ENCODE measurements at regions of chr18 and their contacts with region 1.

Region 1: GRCh38 chr18:63320046-63320689 is 599 bp upstream of the BCL2 start:
- DNase-seq: peak; percentile 92
- H3K4me3 ChIP-seq: peak overlapping the region; percentile 74
- H3K27ac ChIP-seq: peak overlapping the region; percentile 89
- H3K4me1 ChIP-seq: peaks cover 30% of the 10 kb centered on the region
- H3K27me3 ChIP-seq: no peaks in the 10 kb centered on the region
- CTCF ChIP-seq: no peak

Region 2: DNA sequence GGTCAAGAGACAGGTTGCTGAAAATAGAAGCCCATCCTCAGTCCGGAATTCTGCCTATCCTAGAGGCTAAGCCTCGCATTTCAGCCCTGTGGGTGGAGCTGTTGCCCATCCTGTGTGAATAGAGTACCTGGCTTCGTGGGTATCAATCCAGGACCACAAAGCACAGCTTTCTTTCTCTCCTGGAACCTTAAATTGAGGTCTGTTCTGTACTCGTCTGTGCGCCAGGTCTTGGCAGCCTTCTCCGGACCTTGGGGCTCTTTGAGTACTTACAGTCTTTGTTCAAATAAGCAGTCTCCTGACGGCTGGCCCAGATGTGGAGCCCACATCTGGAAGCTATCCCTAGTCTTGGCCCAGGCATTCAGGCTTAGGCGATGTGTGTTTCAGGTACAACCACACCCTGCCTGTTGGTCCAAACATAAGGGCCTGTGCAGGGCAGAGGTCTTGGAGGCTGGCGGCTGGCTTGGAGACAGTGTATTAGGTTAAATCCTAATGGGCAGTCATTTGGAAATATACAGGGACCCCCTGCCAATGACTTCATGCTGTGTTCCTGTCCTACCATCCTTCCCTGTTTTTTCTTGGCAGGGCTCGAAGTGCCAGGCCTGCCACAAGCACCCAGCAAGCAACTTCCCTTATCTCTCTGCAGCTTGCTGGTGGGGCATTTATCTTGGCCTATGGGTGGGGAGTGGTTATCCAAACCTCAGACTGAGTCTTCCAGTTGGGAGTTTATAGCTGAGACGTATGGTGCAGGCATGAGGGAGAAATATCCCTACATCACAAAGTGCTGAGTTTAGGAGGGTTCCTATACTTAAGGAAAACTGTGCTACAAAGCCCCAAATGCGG is 294.7 kb before region 1 on chr18:
- CTCF ChIA-PET with region 1: interaction called, 5 read pairs
- POLR2A ChIA-PET with region 1: no interaction called
- intact Hi-C with region 1: loop called (anchors 2 kb)
- DNase-seq: peak; percentile 63
- H3K4me3 ChIP-seq: no peak overlapping the region
- H3K27ac ChIP-seq: no peak overlapping the region
- H3K4me1 ChIP-seq: peaks cover 3% of the 10 kb centered on the region
- H3K27me3 ChIP-seq: no peaks in the 10 kb centered on the region
- CTCF ChIP-seq: peak; percentile 67

Region 3: DNA sequence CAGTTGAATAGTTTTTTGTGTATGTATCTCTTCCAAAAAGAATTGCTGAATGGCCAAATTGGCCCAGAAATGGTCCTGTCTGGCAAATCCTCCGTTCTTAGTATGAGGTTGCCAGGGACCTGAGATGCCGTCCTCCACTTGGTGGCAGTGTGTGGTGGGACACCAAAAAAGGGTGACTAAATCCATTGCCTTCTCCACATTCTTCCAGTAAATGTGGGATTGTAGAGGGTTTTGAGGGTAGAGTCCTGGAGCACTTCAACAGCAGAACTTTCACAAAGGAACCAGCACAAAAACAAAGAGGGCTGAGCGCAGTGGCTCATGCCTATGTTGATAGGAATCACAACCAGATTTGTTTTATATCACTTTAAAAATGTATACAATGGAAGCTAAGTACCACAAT is 200.5 kb before region 1 on chr18:
- CTCF ChIA-PET with region 1: interaction called, 3 read pairs
- POLR2A ChIA-PET with region 1: no interaction called
- intact Hi-C with region 1: loop called (anchors 2 kb)
- DNase-seq: peak; percentile 89
- H3K4me3 ChIP-seq: no peak overlapping the region
- H3K27ac ChIP-seq: peak overlapping the region; percentile 81
- H3K4me1 ChIP-seq: peaks cover 25% of the 10 kb centered on the region
- H3K27me3 ChIP-seq: no peaks in the 10 kb centered on the region
- CTCF ChIP-seq: peak; percentile 79

Region 4: DNA sequence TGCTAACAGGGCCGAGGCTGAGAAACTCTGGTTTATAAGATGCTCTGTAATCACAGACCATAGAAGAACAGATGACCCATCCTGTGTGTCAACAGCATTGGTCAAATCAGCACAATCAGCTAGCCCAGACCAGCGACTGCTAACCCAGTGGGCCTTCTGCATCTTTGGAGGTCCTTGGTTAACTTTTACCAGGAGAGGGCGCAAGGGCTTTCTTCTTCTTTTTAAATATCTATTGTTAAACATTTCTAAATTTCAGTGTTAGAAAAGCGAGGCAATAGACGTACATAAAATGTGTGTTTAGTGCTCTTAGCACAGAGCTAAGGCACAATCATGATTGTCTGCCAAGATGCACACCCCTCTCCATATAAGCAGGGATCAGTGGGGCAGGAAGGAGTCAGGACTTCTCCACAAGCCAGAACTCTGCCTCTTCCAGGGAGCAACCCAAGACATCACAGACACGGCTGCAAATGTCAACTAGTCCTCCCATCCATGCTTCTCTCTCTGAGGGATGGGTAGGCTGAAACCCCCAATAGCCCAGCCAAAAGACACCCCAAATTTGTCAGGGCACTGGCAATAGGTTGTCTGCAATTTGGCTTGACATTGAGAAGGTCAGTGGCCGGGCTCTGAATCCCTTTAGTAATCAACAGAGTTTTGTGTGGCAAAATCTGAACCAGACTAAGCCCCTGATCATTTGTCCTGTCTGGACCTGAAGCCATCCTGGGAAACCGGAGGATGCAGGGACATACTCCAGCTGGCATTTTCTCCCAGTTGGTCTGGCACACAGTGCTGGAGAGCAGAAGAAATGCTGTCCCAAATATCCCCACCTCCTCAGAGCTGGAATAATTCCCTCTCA is 188.8 kb before region 1 on chr18:
- CTCF ChIA-PET with region 1: interaction called, 3 read pairs
- POLR2A ChIA-PET with region 1: no interaction called
- intact Hi-C with region 1: loop called (anchors 2 kb)
- DNase-seq: peak; percentile 61
- H3K4me3 ChIP-seq: no peak overlapping the region
- H3K27ac ChIP-seq: no peak overlapping the region
- H3K4me1 ChIP-seq: peaks cover 34% of the 10 kb centered on the region
- H3K27me3 ChIP-seq: no peaks in the 10 kb centered on the region
- CTCF ChIP-seq: peak; percentile 73